Left colon (tissue), 2 donors: ENCODE measurements at regions of chr7 and their contacts with region 1.

Region 1: GRCh38 chr7:47254081-47255006 is 327.6 kb downstream of the TNS3 start:
- DNase-seq: peak; percentile 68 to 85
- ATAC-seq: peak; percentile 95

Region 2: DNA sequence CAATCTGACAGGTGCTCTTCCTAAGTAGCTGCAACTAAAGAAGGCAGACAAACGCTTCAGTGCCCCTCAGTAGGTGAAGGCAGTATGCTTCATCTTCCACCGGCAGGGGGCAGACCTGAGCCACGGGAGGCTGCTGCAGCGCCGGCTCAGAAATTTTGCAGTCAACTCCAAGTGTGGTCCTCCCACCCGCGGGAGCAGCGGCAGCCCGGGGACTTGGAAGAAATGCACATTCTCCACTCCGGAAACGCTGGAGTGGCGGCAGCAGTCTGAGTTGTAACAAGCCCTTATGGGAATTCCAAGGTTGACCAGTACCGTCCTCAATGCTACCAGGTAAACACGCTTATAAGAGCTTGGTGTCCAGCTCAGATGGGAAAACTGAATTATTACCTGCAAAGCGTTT is 1336.7 kb before region 1 on chr7:
- intact Hi-C with region 1: loop called in 1 of 2 experiments (anchors 10 kb)
- DNase-seq: peak; percentile 43 to 84
- ATAC-seq: peak; percentile 65

Region 3: GRCh38 chr7:47195641-47196040 is 58.7 kb before region 1 on chr7:
- intact Hi-C with region 1: loop called in 1 of 2 experiments (anchors 10 kb)
- DNase-seq: no peak
- ATAC-seq: no peak

Region 4: GRCh38 chr7:47379629-47380324 is 125.4 kb after region 1 on chr7:
- intact Hi-C with region 1: no loop called
- DNase-seq: peak; percentile 79
- ATAC-seq: peak; percentile 79

Region 5: DNA sequence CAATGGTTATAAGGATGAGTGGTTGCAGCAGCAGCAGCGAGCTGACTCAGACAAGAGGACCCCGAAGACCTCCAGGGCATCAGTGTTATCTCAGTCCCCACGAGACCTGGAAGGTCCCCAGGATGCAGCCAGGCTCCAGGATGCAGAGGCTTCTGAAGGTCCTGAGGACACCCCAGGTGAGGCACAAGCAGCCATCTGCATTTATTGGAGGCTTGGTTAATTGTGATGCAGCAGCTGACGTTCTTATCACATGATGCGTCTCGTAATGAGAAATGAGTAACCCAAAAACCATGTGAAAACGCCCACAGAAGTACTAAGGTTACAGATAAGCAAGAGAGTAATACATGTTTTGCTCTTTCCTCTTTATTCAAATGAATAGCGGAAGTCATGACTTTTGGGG is 798.4 kb after region 1 on chr7:
- intact Hi-C with region 1: no loop called
- DNase-seq: no peak
- ATAC-seq: no peak